Motor neuron (in vitro differentiated cells): ENCODE measurements at regions of chr4 and their contacts with region 1.

Region 1: GRCh38 chr4:101977076-101977475 is 186.5 kb downstream of the BANK1 start:
- ATAC-seq: peak; percentile 61 to 99 (median 70)
- H3K4me3 ChIP-seq: no peak overlapping the region
- H3K27ac ChIP-seq: no peak overlapping the region
- H3K4me1 ChIP-seq: peaks cover 0 to 6% of the 10 kb centered on the region in 2 donors

Region 2: GRCh38 chr4:101774807-101775206 is 202.3 kb before region 1 on chr4:
- in situ Hi-C with region 1: loop called in 1 of 9 experiments (anchors 25 kb)
- ATAC-seq: peak in 2 of 8 experiments; percentile 61 to 85
- H3K4me3 ChIP-seq: no peak overlapping the region
- H3K27ac ChIP-seq: no peak overlapping the region
- H3K4me1 ChIP-seq: no peaks in the 10 kb centered on the region

Region 3: DNA sequence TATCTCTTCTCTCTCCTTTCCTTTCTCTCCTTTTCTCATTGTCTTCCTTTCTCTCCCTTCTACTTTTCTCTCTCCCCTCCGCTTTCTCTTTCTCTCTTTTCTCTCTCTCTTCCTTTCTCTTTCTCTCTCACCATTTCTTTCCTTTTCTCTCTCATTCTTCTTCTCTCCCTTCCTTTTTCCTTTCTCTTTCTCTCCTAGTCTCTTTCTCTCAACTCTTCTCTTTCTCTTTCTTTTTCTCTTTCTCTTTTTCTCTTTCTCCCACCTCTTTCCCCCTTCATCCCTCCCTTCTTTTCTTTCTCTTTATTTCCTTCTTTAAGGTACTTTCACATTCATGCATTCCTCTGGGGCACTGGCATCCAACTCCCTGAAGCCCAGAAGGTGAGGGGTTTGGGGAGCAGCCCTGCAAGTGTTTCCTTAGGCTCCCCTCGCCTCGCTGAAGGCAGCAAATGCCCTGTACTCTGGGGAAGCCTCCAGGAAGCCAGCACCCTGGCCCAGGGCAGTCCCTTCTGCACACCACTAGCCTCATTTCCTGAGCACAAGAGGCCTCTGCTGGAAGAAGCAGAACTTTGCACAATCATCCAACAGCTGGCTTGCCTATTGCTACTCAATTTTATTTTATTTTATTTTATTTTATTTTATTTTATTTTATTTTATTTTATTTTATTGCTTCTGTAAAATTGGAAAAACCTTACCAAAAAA is 648.3 kb after region 1 on chr4:
- in situ Hi-C with region 1: no loop called
- ATAC-seq: peak in 4 of 8 experiments; percentile 6 to 41 (median 16)
- H3K4me3 ChIP-seq: no peak overlapping the region
- H3K27ac ChIP-seq: no peak overlapping the region
- H3K4me1 ChIP-seq: no peaks in the 10 kb centered on the region